ENCODE measurements at regions of chr20 and their contacts with region 1.

Region 1: GRCh38 chr20:57866221-57867106 is 156.6 kb upstream of the PMEPA1 start:
- DNase-seq: no peak
- H3K4me3 ChIP-seq: no peak overlapping the region
- H3K27ac ChIP-seq: no peak overlapping the region
- H3K4me1 ChIP-seq: no peaks in the 10 kb centered on the region
- H3K27me3 ChIP-seq: peaks cover 3% of the 10 kb centered on the region
- CTCF ChIP-seq: no peak
- EP300 ChIP-seq: no peak
- POLR2A ChIP-seq: no peak

Region 2: DNA sequence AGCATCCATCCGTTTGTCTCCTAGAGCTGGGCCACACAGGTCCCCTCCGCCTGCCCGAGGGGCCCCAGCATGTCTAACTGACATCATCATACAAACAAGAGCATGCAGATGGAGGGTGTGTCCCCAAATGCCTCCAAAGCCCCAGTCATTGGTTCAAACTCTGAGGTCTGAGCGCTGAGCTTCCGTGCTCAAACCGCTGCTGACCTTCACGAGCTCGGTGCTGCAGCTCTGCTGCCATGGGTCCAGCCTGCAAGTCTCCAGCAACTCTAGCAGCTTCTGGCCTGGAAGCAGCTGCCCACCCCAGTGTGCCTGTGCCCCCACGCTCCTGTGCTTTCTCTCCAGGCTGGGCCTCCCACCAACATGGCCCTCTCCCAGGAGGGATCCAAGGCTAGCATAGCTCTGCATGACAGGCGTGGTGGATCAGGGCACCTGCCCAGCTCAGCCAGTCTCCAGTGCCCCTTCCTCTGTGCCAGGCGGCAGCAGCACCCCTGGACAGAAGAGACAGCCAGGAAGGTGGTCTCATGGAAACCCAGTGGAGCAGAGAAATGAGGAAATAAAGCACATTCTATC is 25.1 kb before region 1 on chr20:
- in situ Hi-C with region 1: no loop called
- intact Hi-C with region 1: loop called (anchors 1 kb)
- DNase-seq: no peak
- H3K4me3 ChIP-seq: no peak overlapping the region
- H3K27ac ChIP-seq: no peak overlapping the region
- H3K4me1 ChIP-seq: peaks cover 0 to 6% (median 0%) of the 10 kb centered on the region in 4 donors
- H3K27me3 ChIP-seq: no peaks in the 10 kb centered on the region
- CTCF ChIP-seq: no peak
- EP300 ChIP-seq: no peak
- POLR2A ChIP-seq: no peak